PC-9 (cell line): ENCODE measurements at regions of chrX and their contacts with region 1.

Region 1: GRCh38 chrX:48487362-48487785 is 11.4 kb downstream of the FTSJ1 start:
- DNase-seq: peak; percentile 77 to 96
- H3K4me3 ChIP-seq: no peak overlapping the region
- H3K27ac ChIP-seq: peak overlapping the region; percentile 98
- H3K4me1 ChIP-seq: peaks cover 28% of the 10 kb centered on the region
- H3K27me3 ChIP-seq: no peaks in the 10 kb centered on the region
- CTCF ChIP-seq: no peak

Region 2: DNA sequence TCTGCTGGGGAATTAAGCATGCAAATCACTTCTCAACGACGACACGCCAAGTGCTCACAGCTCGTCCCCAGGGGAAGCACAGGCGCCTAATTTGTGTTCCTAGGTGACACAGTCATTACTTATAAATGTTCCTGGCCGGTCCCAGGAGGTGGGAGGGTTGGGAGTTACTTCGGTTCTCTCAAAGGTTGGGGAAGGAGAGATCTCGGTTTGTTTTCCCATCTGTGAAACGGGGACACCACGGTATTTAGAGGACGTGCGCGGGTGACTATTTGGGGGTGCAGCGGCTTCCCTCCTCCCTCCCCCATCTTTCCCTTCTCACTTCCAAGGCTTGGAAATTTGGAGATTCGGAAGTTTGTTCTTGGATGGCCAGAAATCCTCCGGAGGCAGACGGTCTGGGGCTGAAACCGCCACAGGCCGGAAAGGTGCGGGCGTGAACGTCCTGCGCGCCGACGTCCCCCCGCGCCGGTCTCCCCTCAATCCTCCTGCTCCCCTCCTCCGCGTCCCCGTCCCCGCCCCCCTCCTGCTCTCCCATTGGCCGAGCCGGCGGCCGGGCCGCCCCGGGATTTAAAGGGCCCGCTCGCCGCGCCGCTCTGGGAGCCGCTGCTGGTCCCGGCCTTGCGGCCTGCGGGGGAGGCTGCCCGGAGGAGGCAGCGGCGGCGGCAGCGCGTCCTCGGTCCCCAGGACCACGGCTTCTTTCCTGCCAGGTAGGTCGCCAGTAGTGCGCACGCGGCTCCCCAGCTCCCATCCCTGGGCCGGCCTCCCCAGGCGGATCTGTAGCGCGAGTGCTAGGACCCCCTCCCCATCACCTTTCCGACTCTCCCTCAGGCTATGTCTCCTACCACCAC is 21.2 kb after region 1 on chrX and contains the start of gene PORCN:
- CTCF ChIA-PET with region 1: no interaction called
- POLR2A ChIA-PET with region 1: no interaction called
- intact Hi-C with region 1: loop called (anchors 1 kb)
- DNase-seq: peak; percentile 48 to 63
- H3K4me3 ChIP-seq: peak within 1 kb of the TSS; percentile 56
- H3K27ac ChIP-seq: peak within 1 kb of the TSS; percentile 77
- H3K4me1 ChIP-seq: no peaks in the 10 kb centered on the region
- H3K27me3 ChIP-seq: no peaks in the 10 kb centered on the region
- CTCF ChIP-seq: no peak
- total RNA-seq, gene PORCN: 11.9 and 14.1 TPM in 2 replicates

Region 3: GRCh38 chrX:48521353-48522243 is 34.2 kb after region 1 on chrX and contains the start of gene EBP:
- CTCF ChIA-PET with region 1: no interaction called
- POLR2A ChIA-PET with region 1: no interaction called
- intact Hi-C with region 1: loop called (anchors 1 kb)
- DNase-seq: peak; percentile 77 to 84
- H3K4me3 ChIP-seq: peak within 1 kb of the TSS; percentile 59
- H3K27ac ChIP-seq: no peak within 1 kb of the TSS
- H3K4me1 ChIP-seq: no peaks in the 10 kb centered on the region
- H3K27me3 ChIP-seq: no peaks in the 10 kb centered on the region
- CTCF ChIP-seq: no peak
- total RNA-seq, gene EBP: 88.1 and 113 TPM in 2 replicates

Region 4: GRCh38 chrX:48539345-48540027 is 52.1 kb after region 1 on chrX and contains the start of gene TBC1D25:
- CTCF ChIA-PET with region 1: no interaction called
- POLR2A ChIA-PET with region 1: interaction called, 4 read pairs
- intact Hi-C with region 1: loop called (anchors 1 kb)
- DNase-seq: peak; percentile 81 to 90
- H3K4me3 ChIP-seq: peak within 1 kb of the TSS; percentile 54; the same call in 1 of the 2 replicates
- H3K27ac ChIP-seq: 0 out of 2 replicates have a peak within 1 kb of the TSS, but pooled peaks have one; percentile 26
- H3K4me1 ChIP-seq: no peaks in the 10 kb centered on the region
- H3K27me3 ChIP-seq: no peaks in the 10 kb centered on the region
- CTCF ChIP-seq: peak; percentile 40; the same call in 1 of the 2 replicates
- total RNA-seq, gene TBC1D25: 7.4 and 9.0 TPM in 2 replicates